Panc1 (cell line): ENCODE measurements at regions of chr6 and their contacts with region 1.

Region 1: DNA sequence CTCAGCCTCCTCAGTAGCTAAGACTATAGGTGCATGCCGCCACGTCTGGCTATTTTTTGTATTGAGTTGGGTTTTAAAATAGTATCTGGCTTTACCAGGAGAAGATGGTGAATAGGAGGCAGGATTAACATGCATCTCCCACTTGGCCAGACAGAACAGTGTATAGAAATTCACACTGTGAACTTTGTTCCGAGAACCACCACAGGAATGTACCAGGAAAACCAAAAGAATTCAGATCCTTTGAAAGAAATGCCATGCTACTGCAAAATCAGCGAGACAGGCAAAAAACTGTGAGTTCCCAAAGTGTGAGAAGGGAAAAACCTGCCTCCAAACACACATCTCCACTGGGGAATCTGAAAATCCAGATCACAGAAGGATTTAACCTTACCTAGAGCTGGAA is 327.6 kb downstream of the NKAIN2 start:
- DNase-seq: no peak
- ATAC-seq: no peak
- H3K4me3 ChIP-seq: no peak overlapping the region
- H3K27ac ChIP-seq: no peak overlapping the region
- H3K4me1 ChIP-seq: no peaks in the 10 kb centered on the region
- H3K27me3 ChIP-seq: no peaks in the 10 kb centered on the region
- CTCF ChIP-seq: no peak

Region 2: GRCh38 chr6:124099520-124099919 is 31.7 kb before region 1 on chr6:
- CTCF ChIA-PET with region 1: no interaction called
- POLR2A ChIA-PET with region 1: no interaction called
- in situ Hi-C with region 1: no loop called
- intact Hi-C with region 1: loop called (anchors 2 kb)
- DNase-seq: no peak
- ATAC-seq: no peak
- H3K4me3 ChIP-seq: no peak overlapping the region
- H3K27ac ChIP-seq: no peak overlapping the region
- H3K4me1 ChIP-seq: no peaks in the 10 kb centered on the region
- H3K27me3 ChIP-seq: no peaks in the 10 kb centered on the region
- CTCF ChIP-seq: no peak